ENCODE measurements at regions of chr18 and their contacts with region 1.

Region 1: GRCh38 chr18:63090325-63090724 is 229.2 kb downstream of the BCL2 start:
- DNase-seq: peak; percentile 88
- H3K4me3 ChIP-seq: no peak overlapping the region
- H3K27ac ChIP-seq: peak overlapping the region in 3 of 4 donors; percentile 16 to 59 (median 59)
- H3K4me1 ChIP-seq: peaks cover 0 to 19% (median 16%) of the 10 kb centered on the region in 4 donors
- H3K27me3 ChIP-seq: no peaks in the 10 kb centered on the region
- CTCF ChIP-seq: no peak
- EP300 ChIP-seq: peak in 2 of 4 donors; percentile 31 to 68
- POLR2A ChIP-seq: no peak

Region 2: DNA sequence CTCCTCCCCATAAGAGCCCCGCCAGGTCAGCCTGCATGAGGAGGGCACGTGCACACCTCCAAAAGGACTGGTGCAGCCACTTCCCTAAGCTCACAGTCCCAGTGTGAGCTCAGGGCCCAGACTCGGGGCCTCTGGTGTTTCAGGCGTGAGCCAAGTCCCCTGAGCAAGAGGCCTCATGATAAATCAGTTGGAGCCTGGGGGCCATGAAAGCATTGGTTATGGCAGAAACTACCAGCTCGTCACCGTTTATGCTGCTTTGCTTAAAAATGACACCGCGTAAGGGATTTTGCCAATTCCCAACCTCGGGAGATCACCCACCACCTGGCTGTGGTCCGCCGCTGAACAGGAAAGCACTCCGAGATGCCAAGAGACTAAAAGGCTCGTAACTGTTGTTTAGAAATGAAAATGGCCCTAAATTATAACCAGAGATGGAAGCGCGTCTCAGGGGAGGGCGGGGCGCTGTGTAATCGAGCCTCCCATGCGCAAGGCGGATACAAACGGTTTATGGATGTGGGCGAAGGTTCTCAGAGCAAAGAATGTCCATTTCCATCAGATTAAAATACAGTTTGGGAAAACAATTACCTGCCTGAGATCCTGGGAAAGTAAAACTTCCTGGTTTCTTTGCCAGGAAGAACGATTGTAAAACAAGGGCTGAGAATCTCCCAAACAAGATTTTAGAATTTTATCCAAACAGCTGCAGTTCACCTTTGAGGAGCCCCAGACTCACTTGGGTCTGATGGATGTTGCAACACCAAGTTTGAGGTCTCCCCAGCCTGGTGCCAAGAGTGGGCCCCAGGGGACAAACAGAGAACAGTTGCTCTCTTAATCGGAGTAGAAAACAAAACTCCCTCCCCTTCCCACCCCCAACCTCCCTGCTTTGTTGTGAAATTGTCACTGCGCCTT is 87.8 kb after region 1 on chr18:
- intact Hi-C with region 1: loop called (anchors 5 kb)
- DNase-seq: peak; percentile 95
- H3K4me3 ChIP-seq: peak overlapping the region; percentile 2 to 26 (median 25)
- H3K27ac ChIP-seq: peak overlapping the region in 3 of 4 donors; percentile 69 to 79 (median 69)
- H3K4me1 ChIP-seq: peaks cover 0 to 48% (median 45%) of the 10 kb centered on the region in 4 donors
- H3K27me3 ChIP-seq: no peaks in the 10 kb centered on the region
- CTCF ChIP-seq: no peak
- EP300 ChIP-seq: no peak
- POLR2A ChIP-seq: no peak